Left cardiac atrium (tissue), 4 donors: ENCODE measurements at regions of chr10 and their contacts with region 1.

Region 1: GRCh38 chr10:74262856-74263255 is 111.8 kb downstream of the ADK start:
- DNase-seq: no peak
- ATAC-seq: no peak

Region 2: GRCh38 chr10:74194545-74194944 is 68.3 kb before region 1 on chr10:
- intact Hi-C with region 1: no loop called
- DNase-seq: no peak
- ATAC-seq: peak in 1 of 2 donors; percentile 39

Region 3: DNA sequence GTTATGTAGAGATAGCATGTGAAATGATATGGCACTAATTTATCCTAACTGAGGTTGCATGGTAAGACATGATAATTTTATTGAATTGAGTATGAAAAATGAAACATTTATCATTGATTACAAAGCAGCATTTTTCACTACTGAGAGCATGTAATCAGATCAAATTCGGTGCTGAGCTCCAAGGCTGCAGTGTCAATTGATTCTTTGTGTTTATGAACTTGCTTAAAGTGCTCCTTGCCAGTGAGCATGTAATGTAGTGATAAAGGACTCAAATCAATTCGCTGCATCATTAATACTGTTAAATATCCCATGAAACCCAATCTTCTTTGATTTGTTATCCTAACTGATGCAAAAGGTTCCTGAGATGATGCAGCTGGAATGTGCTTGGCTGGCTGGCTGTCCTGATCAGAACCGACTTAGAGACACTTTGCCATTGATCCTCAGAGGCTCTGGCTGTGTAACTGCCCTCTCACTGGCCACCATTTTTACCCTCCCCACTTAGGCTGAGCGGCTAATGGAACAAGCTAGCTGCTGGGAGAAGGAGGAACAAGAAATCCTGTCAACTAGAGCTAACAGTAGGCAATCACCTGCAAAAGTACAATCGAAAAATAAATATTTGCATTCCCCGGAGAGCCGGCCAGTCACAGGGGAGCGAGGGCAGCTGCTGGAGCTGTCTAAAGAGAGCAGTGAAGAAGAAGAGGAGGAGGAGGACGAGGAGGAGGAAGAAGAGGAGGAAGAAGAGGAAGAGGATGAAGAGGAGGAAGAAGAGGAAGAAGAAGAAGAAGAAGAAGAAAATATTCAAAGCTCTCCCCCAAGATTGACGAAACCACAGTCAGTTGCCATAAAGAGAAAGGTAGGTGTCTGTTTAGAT is 758.8 kb after region 1 on chr10:
- intact Hi-C with region 1: loop called in 1 of 2 experiments (anchors 5 kb)
- DNase-seq: no peak
- ATAC-seq: no peak